MCF 10A (cell line): ENCODE measurements at regions of chr9 and their contacts with region 1.

Region 1: GRCh38 chr9:134641173-134641985 is at the start of gene COL5A1:
- DNase-seq: no peak
- H3K4me3 Mint-ChIP-seq: no peak within 1 kb of the TSS
- H3K27ac Mint-ChIP-seq: no peak within 1 kb of the TSS
- H3K4me1 Mint-ChIP-seq: peaks cover 23% of the 10 kb centered on the region
- H3K27me3 Mint-ChIP-seq: peaks cover 4% of the 10 kb centered on the region
- CTCF ChIP-seq: no peak
- total RNA-seq, gene COL5A1: not detected in 2 replicates

Region 2: GRCh38 chr9:134178768-134179551 is 462.4 kb before region 1 on chr9:
- CTCF ChIA-PET with region 1: no interaction called
- POLR2A ChIA-PET with region 1: no interaction called
- intact Hi-C with region 1: loop called (anchors 10 kb)
- DNase-seq: no peak
- H3K4me3 Mint-ChIP-seq: no peak overlapping the region
- H3K27ac Mint-ChIP-seq: no peak overlapping the region
- H3K4me1 Mint-ChIP-seq: no peaks in the 10 kb centered on the region
- H3K27me3 Mint-ChIP-seq: peaks cover 54% of the 10 kb centered on the region
- CTCF ChIP-seq: no peak

Region 3: GRCh38 chr9:134455934-134456739 is 185.2 kb before region 1 on chr9:
- CTCF ChIA-PET with region 1: no interaction called
- POLR2A ChIA-PET with region 1: interaction called, 4 read pairs
- intact Hi-C with region 1: loop called (anchors 5 kb)
- DNase-seq: peak; percentile 85
- H3K4me3 Mint-ChIP-seq: no peak overlapping the region
- H3K27ac Mint-ChIP-seq: peak overlapping the region; percentile 37
- H3K4me1 Mint-ChIP-seq: peaks cover 30% of the 10 kb centered on the region
- H3K27me3 Mint-ChIP-seq: no peaks in the 10 kb centered on the region
- CTCF ChIP-seq: no peak

Region 4: DNA sequence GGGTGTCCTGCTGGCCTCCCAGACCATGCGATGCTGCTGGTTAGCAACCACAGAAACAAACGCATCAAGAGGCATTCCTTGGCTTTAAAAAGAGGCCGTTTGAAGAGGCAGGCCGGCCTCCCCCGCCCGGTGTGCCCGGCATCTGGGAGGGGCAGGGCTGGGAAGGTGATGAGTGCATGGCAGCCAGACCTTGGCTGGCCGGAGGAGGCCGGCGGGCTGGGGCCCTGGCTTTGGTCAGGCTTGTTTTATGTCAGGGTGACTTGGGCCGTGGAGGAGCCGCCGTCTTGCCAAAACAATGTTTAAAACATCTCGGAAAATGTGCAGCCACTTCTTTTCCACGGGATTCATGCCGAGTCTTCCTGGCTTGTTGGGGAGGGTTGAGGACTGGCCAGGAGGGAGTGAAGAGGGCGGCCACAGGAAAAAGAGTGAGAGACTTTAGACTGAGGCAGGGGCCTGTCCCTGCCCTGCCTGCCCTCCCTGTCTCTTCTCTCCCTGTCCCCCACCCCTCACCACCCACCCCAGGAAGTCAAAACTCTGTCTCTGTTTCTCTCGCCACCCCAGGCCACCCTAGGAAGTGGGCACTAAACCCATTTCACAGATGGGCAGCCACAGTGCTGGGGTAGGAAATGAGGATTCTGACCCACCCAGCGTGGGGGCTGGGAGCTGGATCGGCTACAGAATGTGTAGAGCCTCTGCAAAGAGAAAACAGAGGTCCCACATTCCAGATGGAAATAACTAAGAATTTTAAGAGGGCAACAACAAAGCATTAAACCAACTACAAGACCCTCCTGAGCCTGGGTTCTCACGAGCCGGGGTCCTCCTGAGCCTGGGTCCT is 172.1 kb before region 1 on chr9:
- CTCF ChIA-PET with region 1: no interaction called
- POLR2A ChIA-PET with region 1: no interaction called
- intact Hi-C with region 1: no loop called
- DNase-seq: no peak
- H3K4me3 Mint-ChIP-seq: no peak overlapping the region
- H3K27ac Mint-ChIP-seq: no peak overlapping the region
- H3K4me1 Mint-ChIP-seq: no peaks in the 10 kb centered on the region
- H3K27me3 Mint-ChIP-seq: no peaks in the 10 kb centered on the region
- CTCF ChIP-seq: no peak

Region 5: DNA sequence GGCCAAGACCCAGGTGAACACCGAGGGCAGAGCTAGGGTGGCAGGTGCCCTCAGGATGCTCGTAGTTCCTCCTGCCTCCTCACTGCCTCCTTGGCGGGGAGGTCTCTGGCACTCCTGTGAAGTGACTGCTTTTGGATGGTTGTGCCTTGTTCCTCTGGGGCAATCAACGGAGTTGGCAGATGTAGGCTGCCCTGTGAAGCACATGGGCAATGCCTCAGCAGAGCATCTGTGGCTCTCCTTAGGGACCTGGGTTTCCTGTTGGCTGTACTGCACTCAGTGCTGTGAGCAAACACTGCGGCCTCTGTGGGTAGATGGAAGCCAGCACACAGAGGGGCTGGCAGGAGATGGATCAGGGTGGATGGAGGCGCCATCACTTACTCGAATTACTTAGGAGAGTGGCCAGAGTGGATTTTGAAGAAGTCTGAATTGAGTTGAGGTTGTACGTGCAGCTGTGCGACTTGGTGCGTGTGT is 71.2 kb before region 1 on chr9:
- CTCF ChIA-PET with region 1: no interaction called
- POLR2A ChIA-PET with region 1: no interaction called
- intact Hi-C with region 1: no loop called
- DNase-seq: no peak
- H3K4me3 Mint-ChIP-seq: no peak overlapping the region
- H3K27ac Mint-ChIP-seq: no peak overlapping the region
- H3K4me1 Mint-ChIP-seq: no peaks in the 10 kb centered on the region
- H3K27me3 Mint-ChIP-seq: peaks cover 16% of the 10 kb centered on the region
- CTCF ChIP-seq: no peak